ENCODE measurements at regions of chr1 and their contacts with region 1.

Region 1: DNA sequence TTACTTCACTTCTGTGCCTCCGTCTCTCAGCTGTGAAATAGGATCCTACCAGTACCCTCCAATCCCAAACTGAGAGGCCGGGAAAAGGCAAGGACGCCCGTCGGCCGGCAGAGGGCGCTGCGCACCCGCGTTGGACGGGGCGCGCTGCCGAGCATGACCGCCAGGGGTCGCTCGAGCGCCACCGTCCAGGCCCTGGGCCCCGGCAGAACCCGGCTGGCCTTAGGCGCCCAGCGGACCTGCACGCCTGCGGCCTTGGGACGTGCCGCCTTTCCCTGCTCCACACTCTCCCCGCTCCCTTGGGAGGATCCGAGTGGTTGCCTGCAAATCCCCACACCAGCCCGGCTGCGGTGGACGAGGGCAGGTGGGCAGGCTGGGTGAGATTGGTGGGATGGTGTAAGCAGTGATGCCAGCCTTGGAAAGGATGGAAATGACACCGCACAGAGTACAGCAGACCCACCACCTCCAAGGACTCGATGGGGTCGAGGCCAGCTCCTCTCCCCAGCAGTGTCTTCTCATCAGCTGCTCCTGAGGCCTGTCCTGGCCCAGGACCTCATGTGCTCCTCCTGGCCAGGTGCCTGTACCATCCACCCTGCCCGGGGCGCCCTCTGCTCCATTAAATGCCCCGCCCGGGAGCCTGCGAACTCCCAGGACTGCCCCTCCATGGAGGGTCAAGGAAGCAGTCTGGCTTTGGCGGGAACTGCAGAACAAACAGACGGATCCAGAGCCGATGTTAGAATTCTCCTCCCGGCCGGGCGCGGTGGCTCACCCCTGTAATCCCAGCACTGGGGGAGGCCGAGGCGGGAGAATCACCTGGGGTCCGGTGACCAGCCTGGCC is 47.4 kb upstream of the LBR start:
- DNase-seq: peak in 1 of 2 donors; percentile 83
- H3K4me3 ChIP-seq: peak overlapping the region in 1 of 2 donors; percentile 34
- H3K27ac ChIP-seq: no peak overlapping the region
- H3K4me1 ChIP-seq: peaks cover 0 to 13% of the 10 kb centered on the region in 2 donors
- H3K27me3 ChIP-seq: no peaks in the 10 kb centered on the region
- CTCF ChIP-seq: peak; percentile 100

Region 2: GRCh38 chr1:225526878-225527277 is 51.7 kb after region 1 on chr1:
- intact Hi-C with region 1: no loop called
- DNase-seq: no peak
- H3K4me3 ChIP-seq: no peak overlapping the region
- H3K27ac ChIP-seq: peak overlapping the region; percentile 13 to 42
- H3K4me1 ChIP-seq: peaks cover 0 to 20% of the 10 kb centered on the region in 2 donors
- H3K27me3 ChIP-seq: no peaks in the 10 kb centered on the region
- CTCF ChIP-seq: no peak

Region 3: DNA sequence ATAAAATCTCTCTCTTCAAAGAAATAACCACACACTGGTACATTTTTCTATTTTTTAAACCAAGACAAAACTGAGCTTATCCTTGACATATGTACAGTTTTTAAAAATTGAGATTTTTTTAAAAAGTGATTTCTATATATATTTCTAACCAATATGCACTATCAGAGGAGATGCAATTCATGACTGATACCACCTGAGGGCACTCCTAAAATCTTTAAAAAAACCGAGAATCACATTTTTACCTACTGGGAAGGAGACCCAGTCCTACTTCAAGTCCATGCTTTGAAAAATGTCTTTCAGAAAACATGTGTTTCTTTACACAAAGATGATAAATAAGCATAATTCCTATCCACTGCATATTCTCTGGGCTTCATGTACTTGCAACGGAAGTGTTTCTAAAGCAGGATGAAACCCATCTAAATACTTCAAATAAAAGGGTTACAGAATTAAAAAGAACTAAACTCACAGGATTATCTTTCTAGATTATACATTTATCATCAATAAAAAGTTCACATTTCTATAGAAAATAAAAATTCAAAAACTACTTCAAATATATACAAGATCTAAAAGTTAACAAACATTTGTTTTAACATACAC is 79.1 kb after region 1 on chr1:
- intact Hi-C with region 1: loop called (anchors 5 kb)
- DNase-seq: no peak
- H3K4me3 ChIP-seq: no peak overlapping the region
- H3K27ac ChIP-seq: no peak overlapping the region
- H3K4me1 ChIP-seq: peaks cover 0 to 11% of the 10 kb centered on the region in 2 donors
- H3K27me3 ChIP-seq: no peaks in the 10 kb centered on the region
- CTCF ChIP-seq: peak in 2 of 3 experiments; percentile 48 to 59

Region 4: DNA sequence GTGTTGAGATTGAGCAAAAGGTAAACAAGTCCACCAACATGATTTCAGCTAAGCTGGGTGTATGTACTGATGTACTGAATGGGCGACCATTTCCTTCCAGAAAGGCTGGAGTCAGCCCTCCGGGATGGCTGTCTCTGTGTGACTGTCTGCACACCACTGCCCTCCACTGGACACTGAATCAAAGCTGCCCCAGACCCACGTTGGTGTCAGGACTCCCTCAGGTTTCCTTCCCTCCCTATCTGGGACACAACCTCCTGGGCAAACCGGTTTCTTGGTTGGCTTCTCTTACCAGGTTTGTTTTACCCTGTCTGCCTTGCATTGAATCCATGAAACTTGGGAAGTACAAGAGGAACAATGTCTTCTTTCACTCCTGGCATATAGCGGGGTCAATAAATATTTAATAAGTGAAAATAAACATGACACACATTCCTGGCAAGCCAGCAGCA is 297.1 kb after region 1 on chr1:
- intact Hi-C with region 1: loop called (anchors 1 kb)
- DNase-seq: peak in 1 of 2 donors; percentile 92
- H3K4me3 ChIP-seq: no peak overlapping the region
- H3K27ac ChIP-seq: peak overlapping the region in 1 of 2 donors; percentile 15
- H3K4me1 ChIP-seq: peaks cover 3 to 20% of the 10 kb centered on the region in 2 donors
- H3K27me3 ChIP-seq: no peaks in the 10 kb centered on the region
- CTCF ChIP-seq: peak; percentile 84 to 93 (median 90)

Region 5: GRCh38 chr1:225809842-225810578 is 334.8 kb after region 1 on chr1 and contains the start of gene EPHX1:
- intact Hi-C with region 1: loop called (anchors 1 kb)
- DNase-seq: peak; percentile 56 to 94
- H3K4me3 ChIP-seq: peak within 1 kb of the TSS; percentile 66 to 89
- H3K27ac ChIP-seq: peak within 1 kb of the TSS; percentile 84 to 90
- H3K4me1 ChIP-seq: peaks cover 19 to 32% of the 10 kb centered on the region in 2 donors
- H3K27me3 ChIP-seq: no peaks in the 10 kb centered on the region
- CTCF ChIP-seq: peak; percentile 33 to 43 (median 33)
- total RNA-seq, gene EPHX1: 127 TPM

Region 6: GRCh38 chr1:225845571-225846259 is 370.5 kb after region 1 on chr1:
- intact Hi-C with region 1: loop called (anchors 1 kb)
- DNase-seq: peak in 1 of 2 donors; percentile 89
- H3K4me3 ChIP-seq: no peak overlapping the region
- H3K27ac ChIP-seq: peak overlapping the region in 1 of 2 donors; percentile 35
- H3K4me1 ChIP-seq: peaks cover 0 to 2% of the 10 kb centered on the region in 2 donors
- H3K27me3 ChIP-seq: no peaks in the 10 kb centered on the region
- CTCF ChIP-seq: peak; percentile 71 to 85 (median 81)

Region 7: DNA sequence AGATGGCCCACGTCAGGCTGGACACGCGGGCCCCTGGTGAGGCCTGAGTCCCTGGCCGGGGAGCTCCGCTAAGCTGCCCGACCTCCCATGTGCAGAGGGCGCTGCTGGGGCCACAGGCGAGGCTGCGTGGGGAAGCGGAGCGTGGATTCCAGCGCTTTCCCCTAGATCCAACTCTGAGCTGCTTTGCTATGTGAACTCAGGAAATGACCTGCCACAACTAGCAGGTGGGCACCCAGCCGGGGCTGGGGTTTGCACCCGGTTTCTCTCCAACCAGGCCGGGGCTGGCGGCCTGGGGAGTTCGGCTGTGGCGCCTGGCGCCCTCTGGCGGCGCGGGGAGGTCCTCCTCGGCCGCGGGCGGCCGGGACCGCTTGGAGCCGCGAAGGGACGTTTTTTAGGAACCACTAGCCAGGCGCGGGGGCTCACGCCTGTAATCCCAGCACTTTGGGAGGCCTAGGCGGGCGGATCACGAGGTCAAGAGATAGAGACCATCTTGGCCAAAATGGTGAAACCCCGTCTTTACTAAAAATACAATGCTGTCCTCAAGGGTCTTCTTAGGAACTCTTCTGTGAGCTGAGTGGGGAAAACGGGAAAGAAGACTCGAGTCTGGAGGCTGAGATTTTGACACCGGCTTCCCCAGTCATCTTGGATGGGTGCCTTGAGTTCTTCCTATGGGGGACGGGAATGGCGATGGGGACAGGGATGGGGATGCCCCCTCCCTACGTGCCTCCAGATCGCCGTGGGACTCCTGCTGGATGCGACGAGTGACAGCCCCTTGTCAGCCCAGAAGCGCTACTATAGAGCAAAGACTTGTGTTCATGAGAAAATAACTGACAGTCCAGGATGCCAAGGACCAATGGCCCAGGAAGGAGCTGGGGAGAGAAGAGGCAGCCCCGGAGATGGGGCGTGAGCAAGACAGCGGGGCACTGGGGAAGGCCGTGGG is 436.3 kb after region 1 on chr1:
- intact Hi-C with region 1: loop called (anchors 1 kb)
- DNase-seq: peak in 1 of 2 donors; percentile 79
- H3K4me3 ChIP-seq: no peak overlapping the region
- H3K27ac ChIP-seq: no peak overlapping the region
- H3K4me1 ChIP-seq: peaks cover 0 to 4% of the 10 kb centered on the region in 2 donors
- H3K27me3 ChIP-seq: no peaks in the 10 kb centered on the region
- CTCF ChIP-seq: peak; percentile 92 to 97 (median 96)

Region 8: GRCh38 chr1:225977937-225978748 is 502.9 kb after region 1 on chr1:
- intact Hi-C with region 1: loop called (anchors 2 kb)
- DNase-seq: no peak
- H3K4me3 ChIP-seq: no peak overlapping the region
- H3K27ac ChIP-seq: no peak overlapping the region
- H3K4me1 ChIP-seq: no peaks in the 10 kb centered on the region
- H3K27me3 ChIP-seq: no peaks in the 10 kb centered on the region
- CTCF ChIP-seq: no peak